Aorta (tissue), 5 donors: ENCODE measurements at regions of chr3 and their contacts with region 1.

Region 1: DNA sequence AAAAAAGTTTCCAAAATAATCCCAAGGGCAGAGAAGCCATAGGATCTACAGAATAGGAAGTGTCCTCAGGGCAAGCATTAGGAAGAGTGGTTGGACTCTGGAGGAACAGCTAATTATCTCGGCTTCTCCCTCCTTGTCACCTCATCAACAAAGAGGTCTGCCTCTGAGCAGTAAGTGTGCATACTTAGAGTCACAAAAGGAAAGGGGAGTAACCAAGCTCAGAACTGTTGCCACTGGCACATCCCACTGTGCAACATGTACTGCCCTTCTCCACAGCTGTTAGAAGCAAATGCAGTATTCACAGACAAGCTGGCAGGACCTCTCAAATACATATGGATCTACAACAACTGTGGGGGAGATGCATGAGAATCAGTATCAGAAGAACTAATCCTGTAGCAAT is 31.5 kb downstream of the NGLY1 start:
- DNase-seq: no peak
- ATAC-seq: no peak
- H3K4me3 ChIP-seq: no peak overlapping the region
- H3K27ac ChIP-seq: no peak overlapping the region
- H3K4me1 ChIP-seq: no peaks in the 10 kb centered on the region
- H3K27me3 ChIP-seq: no peaks in the 10 kb centered on the region

Region 2: GRCh38 chr3:25678581-25678980 is 73.1 kb before region 1 on chr3:
- intact Hi-C with region 1: loop called in 1 of 2 experiments (anchors 10 kb)
- DNase-seq: no peak
- ATAC-seq: no peak
- H3K4me3 ChIP-seq: no peak overlapping the region
- H3K27ac ChIP-seq: no peak overlapping the region
- H3K4me1 ChIP-seq: no peaks in the 10 kb centered on the region
- H3K27me3 ChIP-seq: no peaks in the 10 kb centered on the region

Region 3: GRCh38 chr3:25817107-25817506 is 65.4 kb after region 1 on chr3:
- intact Hi-C with region 1: loop called in 1 of 2 experiments (anchors 10 kb)
- DNase-seq: no peak
- ATAC-seq: no peak
- H3K4me3 ChIP-seq: no peak overlapping the region
- H3K27ac ChIP-seq: no peak overlapping the region
- H3K4me1 ChIP-seq: no peaks in the 10 kb centered on the region
- H3K27me3 ChIP-seq: no peaks in the 10 kb centered on the region